Mucosa of descending colon (tissue), 3 donors: ENCODE measurements at regions of chr18 and their contacts with region 1.

Region 1: DNA sequence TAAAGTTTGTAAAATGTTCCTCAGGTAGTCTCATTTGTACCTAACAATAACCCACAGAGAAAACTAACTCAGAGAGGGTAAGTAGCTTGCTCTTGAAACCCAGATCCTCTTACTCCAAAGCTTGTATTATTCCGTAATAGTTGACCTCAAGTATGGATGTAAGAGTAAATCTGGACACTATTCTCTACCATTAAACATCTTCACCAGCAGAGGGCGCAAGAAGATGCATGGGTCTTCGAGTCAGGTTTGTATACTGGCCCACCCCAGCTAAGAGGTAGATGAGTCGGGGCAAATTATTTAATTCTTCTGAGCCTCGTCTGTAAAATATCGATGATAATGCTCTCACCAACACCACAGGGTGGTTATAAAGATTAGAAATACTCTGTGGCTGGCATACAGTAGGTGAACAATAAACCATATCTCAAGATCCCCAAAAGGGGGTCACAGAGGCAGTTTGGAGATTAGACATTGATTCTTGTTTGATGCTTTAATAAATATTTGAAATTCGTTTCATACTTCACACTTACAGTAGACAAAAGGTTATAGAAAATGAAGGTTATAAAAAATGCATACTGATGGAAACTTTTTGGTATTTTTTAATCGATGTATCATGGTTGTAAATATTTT is 3.5 kb upstream of the CABLES1 start:
- DNase-seq: peak in 1 of 3 donors; percentile 91
- ATAC-seq: peak; percentile 30
- H3K4me3 ChIP-seq: no peak overlapping the region
- H3K4me1 ChIP-seq: peaks cover 15% of the 10 kb centered on the region
- CTCF ChIP-seq: peak; percentile 43

Region 2: DNA sequence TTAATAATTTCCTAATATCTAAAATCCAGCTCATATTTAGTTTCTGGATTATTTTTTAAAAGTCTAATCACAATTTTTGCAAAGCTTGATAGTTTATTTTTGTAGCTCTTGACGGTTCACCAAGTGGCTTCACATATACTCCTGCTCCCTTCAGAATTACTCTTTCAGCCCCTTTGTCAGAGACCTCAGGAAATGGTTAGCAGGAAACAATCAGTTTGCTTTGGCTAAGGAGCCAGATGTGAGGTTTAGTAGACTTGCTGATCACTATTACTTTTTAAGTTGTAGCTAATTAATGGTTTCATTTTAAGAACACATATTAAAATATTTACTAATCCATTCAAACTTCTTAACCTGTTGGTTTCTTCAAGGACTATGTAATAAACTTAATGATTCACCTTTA is 196.4 kb before region 1 on chr18:
- intact Hi-C with region 1: loop called in 1 of 2 experiments (anchors 5 kb)
- DNase-seq: no peak
- ATAC-seq: no peak
- H3K4me3 ChIP-seq: no peak overlapping the region
- H3K4me1 ChIP-seq: no peaks in the 10 kb centered on the region
- CTCF ChIP-seq: no peak